A673 (cell line): ENCODE measurements at regions of chr17 and their contacts with region 1.

Region 1: DNA sequence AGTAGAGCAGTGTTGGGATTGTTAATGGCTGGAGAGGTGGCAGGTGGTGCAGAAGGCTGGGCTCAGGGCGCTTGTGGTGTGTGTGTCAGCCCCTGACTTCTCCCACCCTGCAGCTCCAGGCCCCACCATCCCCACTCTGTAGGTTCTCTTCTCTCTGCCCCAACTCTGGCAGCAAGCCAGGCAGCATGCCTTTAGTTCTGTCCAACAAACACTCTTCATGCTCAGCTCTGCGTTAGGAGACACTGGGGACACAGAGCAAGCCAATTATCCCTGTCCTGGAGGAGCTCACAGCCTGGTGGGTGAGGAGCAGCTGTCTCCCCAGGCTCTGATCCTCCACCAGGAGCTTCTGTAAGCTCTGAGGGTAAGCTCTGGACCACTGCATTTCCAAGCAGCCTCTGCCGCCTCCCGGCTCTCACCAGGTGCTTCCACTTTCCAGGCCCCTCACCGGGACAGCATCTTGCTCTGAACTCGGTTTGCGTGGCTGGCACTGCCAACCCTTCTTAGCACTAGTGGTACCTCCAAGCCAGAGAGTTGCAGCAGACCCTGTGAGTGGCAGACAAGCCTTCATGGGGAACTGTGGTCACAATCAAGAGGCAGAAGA is 34.3 kb upstream of the WSCD1 start:
- DNase-seq: no peak
- H3K4me3 ChIP-seq: no peak overlapping the region
- H3K27ac ChIP-seq: no peak overlapping the region
- H3K4me1 ChIP-seq: no peaks in the 10 kb centered on the region
- H3K27me3 ChIP-seq: peaks cover 38% of the 10 kb centered on the region
- CTCF ChIP-seq: no peak

Region 2: DNA sequence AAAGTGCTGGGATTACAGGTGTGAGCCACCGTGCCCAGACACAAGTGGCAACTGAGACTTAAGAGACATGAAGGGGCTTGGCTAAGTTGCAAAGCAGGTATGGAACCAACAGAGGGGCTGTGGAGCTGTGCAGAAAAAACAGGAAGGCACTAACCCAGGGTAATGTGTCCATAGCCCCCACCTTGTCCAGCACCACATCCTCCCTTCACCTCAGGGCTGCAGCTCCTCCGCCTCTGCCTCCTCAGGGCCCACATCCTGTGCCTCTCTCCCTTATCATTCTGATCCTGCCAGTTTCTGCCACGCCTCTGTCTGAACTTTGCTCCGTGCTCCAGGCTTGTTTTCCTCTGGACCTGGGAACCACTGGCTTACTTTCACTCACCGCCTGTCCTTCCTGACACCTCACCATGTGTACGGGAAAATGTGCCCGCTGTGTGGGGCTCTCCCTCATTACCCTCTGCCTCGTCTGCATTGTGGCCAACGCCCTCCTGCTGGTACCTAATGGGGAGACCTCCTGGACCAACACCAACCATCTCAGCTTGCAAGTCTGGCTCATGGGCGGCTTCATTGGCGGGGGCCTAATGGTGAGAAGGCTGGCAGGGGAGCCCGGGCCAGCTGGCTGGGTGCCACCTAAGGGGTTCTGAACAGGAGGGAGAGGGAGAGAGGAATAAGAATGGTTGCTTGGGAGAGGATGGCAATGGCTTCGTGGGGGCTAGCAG is 1264.2 kb before region 1 on chr17 and contains the start of gene TM4SF5:
- CTCF ChIA-PET with region 1: no interaction called
- POLR2A ChIA-PET with region 1: no interaction called
- intact Hi-C with region 1: no loop called
- DNase-seq: no peak
- H3K4me3 ChIP-seq: no peak within 1 kb of the TSS
- H3K27ac ChIP-seq: no peak within 1 kb of the TSS
- H3K4me1 ChIP-seq: no peaks in the 10 kb centered on the region
- H3K27me3 ChIP-seq: no peaks in the 10 kb centered on the region
- CTCF ChIP-seq: no peak
- total RNA-seq, gene TM4SF5: not detected in 2 replicates

Region 3: GRCh38 chr17:5888811-5889210 is 147.1 kb before region 1 on chr17:
- CTCF ChIA-PET with region 1: no interaction called
- POLR2A ChIA-PET with region 1: no interaction called
- intact Hi-C with region 1: loop called (anchors 10 kb)
- DNase-seq: no peak
- H3K4me3 ChIP-seq: no peak overlapping the region
- H3K27ac ChIP-seq: no peak overlapping the region
- H3K4me1 ChIP-seq: no peaks in the 10 kb centered on the region
- H3K27me3 ChIP-seq: peaks cover 44% of the 10 kb centered on the region
- CTCF ChIP-seq: no peak